ENCODE measurements at regions of chr7 and their contacts with region 1.

Region 1: GRCh38 chr7:90595801-90596671 is at the start of gene CDK14:
- DNase-seq: peak; percentile 53
- ATAC-seq: peak; percentile 75
- H3K4me3 ChIP-seq: peak within 1 kb of the TSS; percentile 97
- H3K27ac ChIP-seq: peak within 1 kb of the TSS; percentile 88
- H3K4me1 ChIP-seq: peaks cover 2% of the 10 kb centered on the region; the same call in 1 of the 2 replicates
- H3K27me3 ChIP-seq: no peaks in the 10 kb centered on the region
- CTCF ChIP-seq: peak; percentile 52
- POLR2A ChIP-seq: no peak; the same call in 1 of the 2 replicates
- RAD21 ChIP-seq: peak; percentile 16; the same call in 1 of the 2 replicates
- total RNA-seq, gene CDK14: 28.1 and 29.6 TPM in 2 replicates

Region 2: GRCh38 chr7:90155206-90155605 is 440.8 kb before region 1 on chr7:
- CTCF ChIA-PET with region 1: no interaction called
- POLR2A ChIA-PET with region 1: no interaction called
- dilution Hi-C with region 1: no loop called
- in situ Hi-C with region 1: no loop called
- intact Hi-C with region 1: no loop called
- DNase-seq: no peak
- ATAC-seq: no peak
- H3K4me3 ChIP-seq: no peak overlapping the region
- H3K27ac ChIP-seq: no peak overlapping the region
- H3K4me1 ChIP-seq: no peaks in the 10 kb centered on the region
- H3K27me3 ChIP-seq: no peaks in the 10 kb centered on the region
- CTCF ChIP-seq: no peak
- POLR2A ChIP-seq: no peak
- RAD21 ChIP-seq: no peak

Region 3: GRCh38 chr7:90455163-90456030 is 140.6 kb before region 1 on chr7:
- CTCF ChIA-PET with region 1: interaction called, 3 read pairs
- POLR2A ChIA-PET with region 1: no interaction called
- dilution Hi-C with region 1: no loop called
- in situ Hi-C with region 1: no loop called
- intact Hi-C with region 1: loop called (anchors 1 kb)
- DNase-seq: peak; percentile 57
- ATAC-seq: peak; percentile 89
- H3K4me3 ChIP-seq: peak overlapping the region; percentile 23; the same call in 1 of the 2 replicates
- H3K27ac ChIP-seq: no peak overlapping the region
- H3K4me1 ChIP-seq: no peaks in the 10 kb centered on the region
- H3K27me3 ChIP-seq: no peaks in the 10 kb centered on the region
- CTCF ChIP-seq: peak; percentile 70
- POLR2A ChIP-seq: no peak
- RAD21 ChIP-seq: peak; percentile 72

Region 4: DNA sequence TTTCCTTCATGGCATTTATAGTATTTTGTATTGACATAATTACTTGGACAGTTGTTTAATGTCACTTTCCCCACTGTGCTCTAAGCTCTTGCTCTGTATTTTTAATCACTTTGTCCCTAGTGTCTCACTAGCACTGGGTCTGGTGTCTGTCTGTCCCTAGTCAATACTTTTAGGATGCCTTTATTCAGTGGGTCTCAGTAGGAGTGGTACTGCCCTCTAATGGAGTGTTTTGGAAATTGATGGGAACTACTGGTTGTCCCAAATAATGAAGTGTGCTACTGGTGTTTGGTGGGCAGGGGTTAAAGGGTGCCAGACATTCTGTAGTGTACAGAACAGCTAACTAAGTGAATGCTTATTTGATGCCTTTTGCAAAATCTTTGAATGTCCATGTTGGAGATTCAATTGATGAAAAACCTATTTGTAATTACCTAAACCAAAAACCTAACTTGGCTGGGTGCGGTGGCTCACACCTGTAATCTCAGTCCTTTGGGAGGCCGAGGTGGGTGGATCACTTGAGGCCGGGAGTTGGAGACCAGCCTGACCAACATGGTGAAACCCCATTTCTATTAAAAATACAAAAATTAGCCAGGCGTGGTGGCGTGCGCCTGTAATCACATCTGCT is 33.4 kb after region 1 on chr7:
- CTCF ChIA-PET with region 1: interaction called, 4 read pairs
- POLR2A ChIA-PET with region 1: no interaction called
- dilution Hi-C with region 1: no loop called
- in situ Hi-C with region 1: no loop called
- intact Hi-C with region 1: loop called (anchors 1 kb)
- DNase-seq: peak; percentile 63
- ATAC-seq: peak; percentile 73
- H3K4me3 ChIP-seq: no peak overlapping the region
- H3K27ac ChIP-seq: no peak overlapping the region
- H3K4me1 ChIP-seq: peaks cover 8% of the 10 kb centered on the region
- H3K27me3 ChIP-seq: no peaks in the 10 kb centered on the region
- CTCF ChIP-seq: peak; percentile 68
- POLR2A ChIP-seq: no peak
- RAD21 ChIP-seq: peak; percentile 76

Region 5: DNA sequence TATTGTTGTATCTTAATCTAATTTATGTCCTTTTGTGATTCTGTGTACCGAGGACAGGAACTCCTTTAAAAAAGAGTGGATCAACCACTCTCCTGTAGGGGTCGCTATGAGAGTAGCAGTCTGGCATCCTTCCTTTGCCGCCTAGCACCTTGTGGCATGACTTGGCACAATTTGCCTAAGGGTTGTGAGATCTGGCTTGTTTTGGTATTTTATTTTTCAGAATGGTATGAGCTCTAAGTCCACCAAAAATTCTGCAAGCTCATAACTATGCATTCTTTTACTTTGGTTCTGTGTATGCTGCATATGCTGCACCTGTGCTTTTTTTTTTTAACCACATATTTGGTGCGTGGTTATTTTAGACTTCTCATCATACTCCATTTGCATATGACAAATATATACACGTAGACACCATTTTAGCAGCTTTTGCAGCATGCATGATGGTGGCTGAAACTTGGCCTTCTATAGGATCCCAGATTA is 112.8 kb after region 1 on chr7:
- CTCF ChIA-PET with region 1: no interaction called
- POLR2A ChIA-PET with region 1: no interaction called
- dilution Hi-C with region 1: no loop called
- in situ Hi-C with region 1: no loop called
- intact Hi-C with region 1: loop called (anchors 5 kb)
- DNase-seq: no peak
- ATAC-seq: no peak
- H3K4me3 ChIP-seq: no peak overlapping the region
- H3K27ac ChIP-seq: no peak overlapping the region
- H3K4me1 ChIP-seq: peaks cover 12% of the 10 kb centered on the region
- H3K27me3 ChIP-seq: no peaks in the 10 kb centered on the region
- CTCF ChIP-seq: peak; percentile 37
- POLR2A ChIP-seq: no peak
- RAD21 ChIP-seq: peak; percentile 41

Region 6: DNA sequence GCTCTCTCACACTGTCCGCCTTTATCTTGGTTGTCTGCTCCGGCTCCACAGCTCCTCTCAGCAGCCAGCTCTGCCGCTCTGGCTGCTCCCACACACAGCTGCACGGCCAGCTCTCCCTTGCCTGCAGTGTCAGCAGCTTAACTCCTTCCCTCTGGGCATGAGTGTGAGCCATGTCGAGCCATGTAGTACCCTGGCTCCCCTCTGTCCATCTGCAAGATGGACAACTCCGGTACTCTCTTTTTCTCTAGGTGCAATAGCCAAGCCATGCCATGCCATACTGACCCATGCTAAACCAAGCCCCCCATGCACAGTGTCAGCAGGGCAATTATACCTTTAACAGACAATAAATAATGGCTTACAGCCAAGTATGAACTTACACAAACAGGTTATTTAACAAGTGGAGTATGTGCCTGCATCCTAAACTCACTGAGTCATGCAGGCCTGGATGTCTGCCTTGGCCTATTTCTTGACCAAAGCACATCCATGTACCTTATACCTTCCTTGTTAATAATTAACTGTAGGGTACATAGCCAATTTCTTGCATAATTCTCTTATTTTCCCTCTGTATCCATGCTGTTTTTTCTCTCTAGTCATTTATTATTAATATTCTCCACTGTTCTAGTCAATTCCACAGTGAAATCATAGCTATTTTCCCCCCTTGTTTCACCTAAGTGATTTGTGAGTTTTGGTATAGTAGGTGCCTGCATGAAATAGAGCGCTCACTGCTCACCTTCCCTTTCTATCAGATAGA is 171.0 kb after region 1 on chr7:
- CTCF ChIA-PET with region 1: interaction called, 3 read pairs
- POLR2A ChIA-PET with region 1: no interaction called
- dilution Hi-C with region 1: no loop called
- in situ Hi-C with region 1: no loop called
- intact Hi-C with region 1: loop called (anchors 5 kb)
- DNase-seq: peak; percentile 82
- ATAC-seq: peak; percentile 95
- H3K4me3 ChIP-seq: no peak overlapping the region
- H3K27ac ChIP-seq: peak overlapping the region; percentile 12; the same call in 1 of the 2 replicates
- H3K4me1 ChIP-seq: peaks cover 3% of the 10 kb centered on the region; the same call in 1 of the 2 replicates
- H3K27me3 ChIP-seq: no peaks in the 10 kb centered on the region
- CTCF ChIP-seq: no peak
- POLR2A ChIP-seq: no peak
- RAD21 ChIP-seq: no peak

Region 7: GRCh38 chr7:90958647-90959046 is 362.6 kb after region 1 on chr7:
- CTCF ChIA-PET with region 1: interaction called, 3 read pairs
- POLR2A ChIA-PET with region 1: no interaction called
- dilution Hi-C with region 1: no loop called
- in situ Hi-C with region 1: no loop called
- intact Hi-C with region 1: loop called (anchors 10 kb)
- DNase-seq: peak; percentile 66
- ATAC-seq: peak; percentile 63
- H3K4me3 ChIP-seq: no peak overlapping the region
- H3K27ac ChIP-seq: no peak overlapping the region
- H3K4me1 ChIP-seq: no peaks in the 10 kb centered on the region
- H3K27me3 ChIP-seq: no peaks in the 10 kb centered on the region
- CTCF ChIP-seq: no peak
- POLR2A ChIP-seq: no peak
- RAD21 ChIP-seq: no peak

Region 8: DNA sequence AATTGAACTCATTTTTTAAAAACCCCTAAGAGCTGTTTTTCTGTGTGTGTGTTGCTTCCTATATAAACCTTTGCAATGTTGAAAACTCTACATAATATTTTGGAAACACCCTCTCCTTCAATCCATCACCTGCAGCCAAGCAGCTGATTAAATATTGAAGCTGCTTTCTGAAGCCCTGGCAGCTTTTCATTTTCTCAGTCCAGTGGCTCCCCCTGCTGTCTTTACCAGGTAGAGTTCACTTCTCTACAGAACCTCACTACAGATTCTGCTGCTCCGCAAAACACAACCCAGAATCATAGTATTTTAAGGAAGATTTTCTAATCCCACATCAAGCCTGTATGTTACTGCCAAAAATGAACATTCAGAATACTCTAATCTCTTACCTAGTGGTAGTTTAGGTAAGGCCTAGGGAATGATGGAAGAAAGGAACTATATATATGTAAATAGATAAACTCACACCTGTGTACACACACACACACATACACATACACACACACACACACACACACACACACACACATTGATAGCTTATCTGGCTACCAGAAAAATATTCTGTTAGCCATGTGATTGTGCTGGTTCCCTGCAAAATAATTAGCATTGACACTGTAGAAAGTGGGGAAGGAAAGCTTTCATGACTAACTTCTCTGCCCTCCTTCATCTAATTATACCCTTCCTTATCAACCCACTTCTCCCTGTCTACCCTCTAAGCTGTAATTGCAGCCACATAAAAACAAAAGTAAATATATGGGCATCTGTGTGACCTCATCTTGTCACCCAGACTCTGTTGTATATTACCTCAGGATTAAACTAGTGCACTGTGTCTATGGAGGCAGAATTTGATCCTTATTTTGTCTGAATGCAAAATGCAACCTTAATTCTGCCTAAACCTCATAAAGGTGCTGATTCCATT is 438.7 kb after region 1 on chr7:
- CTCF ChIA-PET with region 1: interaction called, 8 read pairs
- POLR2A ChIA-PET with region 1: no interaction called
- dilution Hi-C with region 1: no loop called
- in situ Hi-C with region 1: no loop called
- intact Hi-C with region 1: loop called (anchors 1 kb)
- DNase-seq: peak; percentile 63
- ATAC-seq: peak; percentile 78
- H3K4me3 ChIP-seq: no peak overlapping the region
- H3K27ac ChIP-seq: no peak overlapping the region
- H3K4me1 ChIP-seq: peaks cover 3% of the 10 kb centered on the region; the same call in 1 of the 2 replicates
- H3K27me3 ChIP-seq: no peaks in the 10 kb centered on the region
- CTCF ChIP-seq: peak; percentile 74
- POLR2A ChIP-seq: no peak
- RAD21 ChIP-seq: peak; percentile 82